ENCODE measurements at regions of chr15 and their contacts with region 1.

Region 1: GRCh38 chr15:29090617-29091466 is 178.8 kb downstream of the NSMCE3 start:
- DNase-seq: peak; percentile 79
- H3K4me3 ChIP-seq: peak overlapping the region in 1 of 2 experiments; percentile 17; a peak in 1 of 4 replicates
- H3K27ac ChIP-seq: no peak overlapping the region
- H3K4me1 ChIP-seq: no peaks in the 10 kb centered on the region; a peak in 1 of 4 replicates
- H3K27me3 ChIP-seq: no peaks in the 10 kb centered on the region
- CTCF ChIP-seq: peak; percentile 85
- EP300 ChIP-seq: no peak
- RAD21 ChIP-seq: peak; percentile 63

Region 2: DNA sequence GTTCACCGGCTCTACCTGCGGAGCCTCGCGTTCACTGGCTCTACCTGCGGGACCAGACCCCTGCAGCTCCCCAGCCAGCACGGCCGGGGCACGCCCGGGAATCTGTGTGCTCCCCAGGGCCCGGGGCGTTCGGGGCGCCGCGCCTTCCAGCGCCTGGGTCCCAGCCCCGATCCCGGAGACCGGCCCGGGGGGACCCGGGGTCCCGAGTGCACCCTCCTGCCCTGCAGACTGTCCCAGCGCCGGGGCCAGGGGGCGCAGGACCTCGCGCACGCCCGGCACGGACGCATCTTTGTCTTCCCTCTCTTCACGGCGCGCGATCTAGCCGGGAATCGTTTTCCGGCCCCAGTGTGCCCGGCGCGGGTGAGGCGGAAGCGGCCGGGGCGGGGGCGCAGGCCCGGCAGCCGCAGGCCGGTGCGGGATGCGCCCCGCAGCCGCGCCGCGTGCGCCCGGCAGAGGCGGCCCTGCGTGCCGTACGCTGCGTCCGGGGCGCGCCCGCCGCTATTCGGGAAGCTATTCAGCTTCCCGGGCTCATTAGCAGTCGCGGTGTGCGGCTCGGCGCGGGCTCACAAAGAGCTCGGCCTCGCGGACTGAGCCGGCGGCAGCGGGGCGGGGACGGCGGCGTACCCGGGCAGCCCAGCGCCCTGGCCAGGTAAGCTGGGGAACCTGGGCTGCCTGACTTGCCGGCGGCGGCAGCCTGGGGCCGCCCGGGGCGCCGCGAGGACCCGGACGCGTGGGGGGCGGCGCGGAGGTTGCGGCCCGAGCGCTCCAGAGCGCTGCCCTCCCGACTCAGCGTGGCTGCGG is 205.0 kb before region 1 on chr15 and contains the start of gene APBA2:
- CTCF ChIA-PET with region 1: interaction called, 11 read pairs
- POLR2A ChIA-PET with region 1: no interaction called
- DNase-seq: peak; percentile 87
- H3K4me3 ChIP-seq: peak within 1 kb of the TSS; percentile 64 to 69
- H3K27ac ChIP-seq: peak within 1 kb of the TSS in 1 of 2 experiments; percentile 75; a peak in 2 of 4 replicates
- H3K4me1 ChIP-seq: peaks cover 0 to 32% of the 10 kb centered on the region in 2 experiments; a peak in 1 of 4 replicates
- H3K27me3 ChIP-seq: no peaks in the 10 kb centered on the region
- CTCF ChIP-seq: no peak
- EP300 ChIP-seq: no peak
- RAD21 ChIP-seq: no peak
- polyA plus RNA-seq, gene APBA2: 12.7 and 14.0 TPM in 2 replicates

Region 3: DNA sequence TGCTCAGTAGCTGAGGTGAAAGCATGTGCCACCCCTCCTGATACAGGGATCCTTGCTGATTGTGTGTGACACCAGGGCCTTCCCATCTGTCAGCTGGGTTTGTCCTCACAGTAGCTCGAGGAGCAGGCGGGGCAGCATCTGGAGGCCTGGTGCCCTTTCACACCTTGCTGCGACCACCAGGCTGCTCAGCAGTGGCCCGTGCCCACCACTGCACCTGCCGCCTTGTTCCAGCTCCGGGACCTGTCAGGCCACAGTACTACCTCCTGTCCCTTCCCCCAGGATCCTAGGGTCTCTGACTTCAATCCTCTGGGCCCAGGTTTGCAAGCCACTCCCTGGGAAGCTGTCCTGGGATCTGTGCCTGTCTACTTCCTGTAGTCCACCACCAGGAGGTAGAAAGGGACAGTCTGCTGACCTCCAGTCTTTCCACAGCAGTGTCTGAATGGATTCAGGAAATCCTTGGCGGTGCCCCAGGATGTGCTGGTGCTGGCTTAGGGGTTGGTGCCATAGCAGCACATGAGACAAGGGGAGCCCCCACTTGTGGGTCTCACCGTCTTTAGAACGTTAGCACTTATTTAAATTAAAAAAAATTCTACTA is 177.6 kb before region 1 on chr15:
- CTCF ChIA-PET with region 1: interaction called, 10 read pairs
- POLR2A ChIA-PET with region 1: no interaction called
- DNase-seq: peak; percentile 58
- H3K4me3 ChIP-seq: no peak overlapping the region
- H3K27ac ChIP-seq: peak overlapping the region in 1 of 2 experiments; percentile 88; a peak in 2 of 4 replicates
- H3K4me1 ChIP-seq: peaks cover 0 to 52% of the 10 kb centered on the region in 2 experiments; a peak in 2 of 4 replicates
- H3K27me3 ChIP-seq: no peaks in the 10 kb centered on the region
- CTCF ChIP-seq: no peak
- EP300 ChIP-seq: no peak
- RAD21 ChIP-seq: peak; percentile 51

Region 4: GRCh38 chr15:28989239-28989830 is 101.5 kb before region 1 on chr15:
- CTCF ChIA-PET with region 1: interaction called, 35 read pairs
- POLR2A ChIA-PET with region 1: no interaction called
- DNase-seq: peak; percentile 59
- H3K4me3 ChIP-seq: no peak overlapping the region
- H3K27ac ChIP-seq: no peak overlapping the region
- H3K4me1 ChIP-seq: peaks cover 0 to 47% of the 10 kb centered on the region in 2 experiments; a peak in 1 of 4 replicates
- H3K27me3 ChIP-seq: no peaks in the 10 kb centered on the region
- CTCF ChIP-seq: peak; percentile 32
- EP300 ChIP-seq: no peak
- RAD21 ChIP-seq: peak; percentile 40

Region 5: DNA sequence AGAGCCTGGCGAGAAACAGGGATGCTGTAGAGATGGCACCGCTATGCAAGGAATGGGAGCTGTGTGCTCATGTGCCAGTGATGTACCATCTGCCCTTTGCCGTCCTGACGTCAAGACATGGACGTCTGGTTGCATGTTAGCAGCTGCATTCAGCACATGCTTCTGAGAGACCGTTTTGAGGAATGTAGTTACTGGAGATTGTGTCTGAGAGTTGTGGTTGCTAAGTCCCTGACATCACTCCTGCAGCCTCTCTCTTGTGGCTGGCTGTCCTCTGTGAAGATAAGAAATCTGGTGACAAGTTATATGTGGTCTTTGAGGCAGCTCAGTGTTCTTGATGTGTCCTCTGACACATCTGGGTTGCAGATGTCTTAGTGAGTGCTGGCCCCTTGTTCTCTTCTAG is 40.0 kb before region 1 on chr15:
- CTCF ChIA-PET with region 1: interaction called, 11 read pairs
- POLR2A ChIA-PET with region 1: no interaction called
- DNase-seq: peak; percentile 67
- H3K4me3 ChIP-seq: no peak overlapping the region
- H3K27ac ChIP-seq: peak overlapping the region in 1 of 2 experiments; percentile 71; a peak in 2 of 4 replicates
- H3K4me1 ChIP-seq: peaks cover 0 to 23% of the 10 kb centered on the region in 2 experiments; a peak in 2 of 4 replicates
- H3K27me3 ChIP-seq: no peaks in the 10 kb centered on the region
- CTCF ChIP-seq: no peak
- EP300 ChIP-seq: no peak; a peak in 1 of 4 replicates
- RAD21 ChIP-seq: no peak

Region 6: DNA sequence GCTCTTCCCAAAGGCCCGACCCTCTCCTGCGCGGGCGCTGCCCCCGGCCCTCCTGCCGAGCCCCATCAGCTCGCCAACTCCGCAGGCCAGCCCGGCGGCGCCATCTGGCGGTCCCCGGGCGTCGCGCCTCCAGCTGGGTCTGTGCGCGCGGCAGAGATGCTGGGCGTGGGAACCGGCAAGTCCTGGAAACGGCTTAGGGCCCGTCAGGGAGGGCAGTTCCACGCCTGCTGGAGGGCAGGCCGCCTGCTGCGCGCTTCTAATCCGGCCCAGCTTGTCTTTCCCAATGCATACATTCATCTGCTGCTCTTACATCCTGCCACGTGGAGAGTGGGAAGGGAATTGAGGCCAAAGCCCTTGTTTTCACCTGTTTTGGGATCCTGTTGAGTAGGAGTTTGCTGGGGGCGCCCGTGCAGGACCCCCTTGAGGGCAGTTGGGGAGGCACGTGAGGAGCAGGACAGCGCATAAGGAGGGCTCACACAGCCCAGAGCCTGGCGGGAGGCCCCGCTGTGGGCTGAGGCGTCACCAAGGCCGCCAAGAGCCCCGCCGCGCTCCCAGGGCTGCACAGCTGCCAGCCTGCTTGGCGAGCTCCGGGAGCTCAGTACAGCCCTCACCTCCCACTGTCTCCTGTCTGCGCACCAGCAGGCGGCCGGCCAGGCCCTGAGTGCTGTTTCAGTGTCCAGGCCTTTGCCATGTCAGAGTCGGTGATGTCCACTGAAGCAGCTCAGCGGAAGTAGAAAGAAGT is 13.2 kb after region 1 on chr15:
- CTCF ChIA-PET with region 1: interaction called, 51 read pairs
- POLR2A ChIA-PET with region 1: no interaction called
- DNase-seq: no peak
- H3K4me3 ChIP-seq: no peak overlapping the region; a peak in 1 of 4 replicates
- H3K27ac ChIP-seq: no peak overlapping the region
- H3K4me1 ChIP-seq: no peaks in the 10 kb centered on the region
- H3K27me3 ChIP-seq: no peaks in the 10 kb centered on the region
- CTCF ChIP-seq: no peak
- EP300 ChIP-seq: no peak
- RAD21 ChIP-seq: no peak

Region 7: GRCh38 chr15:29109762-29110161 is 18.9 kb after region 1 on chr15:
- CTCF ChIA-PET with region 1: interaction called, 10 read pairs
- POLR2A ChIA-PET with region 1: no interaction called
- DNase-seq: no peak
- H3K4me3 ChIP-seq: no peak overlapping the region
- H3K27ac ChIP-seq: no peak overlapping the region
- H3K4me1 ChIP-seq: peaks cover 0 to 4% of the 10 kb centered on the region in 2 experiments; a peak in 1 of 4 replicates
- H3K27me3 ChIP-seq: no peaks in the 10 kb centered on the region
- CTCF ChIP-seq: no peak
- EP300 ChIP-seq: no peak
- RAD21 ChIP-seq: no peak

Measured in SK-N-SH (cell line).